Adrenal gland (tissue), 19 donors: ENCODE measurements at regions of chr10 and their contacts with region 1.

Region 1: DNA sequence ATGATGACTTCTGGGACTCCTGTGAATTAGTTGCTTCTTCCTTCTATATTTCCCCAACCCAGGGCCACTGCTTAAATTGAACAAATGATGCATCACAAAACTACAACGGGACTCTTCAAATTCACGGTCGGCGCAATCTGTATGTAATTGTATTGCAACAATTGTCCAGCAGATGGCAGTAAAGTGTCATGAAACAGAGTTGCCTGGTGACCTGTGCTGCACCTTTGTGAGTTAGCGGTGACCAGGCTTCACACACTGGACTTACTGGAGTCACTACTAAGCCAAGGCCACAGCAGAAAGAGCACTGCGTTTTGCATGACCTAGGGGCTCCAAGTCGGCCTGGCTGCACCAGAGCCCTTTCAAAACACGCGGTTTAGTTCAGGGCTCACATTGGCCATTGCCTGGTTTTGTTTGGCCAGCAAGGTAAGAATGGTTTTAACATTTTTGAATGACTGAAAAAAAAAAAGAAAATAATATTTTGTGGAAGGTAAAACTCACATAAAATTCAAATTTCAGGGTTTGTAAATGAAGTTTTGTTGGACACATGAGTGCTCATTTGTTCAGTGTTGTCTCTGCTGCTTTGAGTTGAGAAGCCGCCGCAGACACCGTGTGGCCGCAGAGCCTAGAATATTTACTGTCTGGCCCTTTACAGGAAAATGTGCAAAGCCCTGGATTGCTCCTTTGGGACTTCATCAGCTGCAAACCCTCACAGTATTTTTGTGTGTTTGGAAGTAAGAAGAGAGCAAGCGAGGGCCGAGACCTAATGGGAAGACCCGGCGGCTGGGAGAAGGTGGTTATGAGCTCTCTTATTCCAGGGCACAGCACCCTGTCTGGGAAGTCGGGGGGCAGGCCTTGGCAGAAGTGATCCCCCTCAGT is 23.2 kb upstream of the ZNF32 start:
- DNase-seq: peak; percentile 45 to 75 (median 61)
- H3K4me3 ChIP-seq: no peak overlapping the region
- H3K27ac ChIP-seq: no peak overlapping the region
- H3K4me1 ChIP-seq: peaks cover 0 to 3% of the 10 kb centered on the region in 2 donors
- H3K27me3 ChIP-seq: peaks cover 16% of the 10 kb centered on the region
- CTCF ChIP-seq: peak; percentile 77 to 92 (median 84)
- POLR2A ChIP-seq: no peak

Region 2: DNA sequence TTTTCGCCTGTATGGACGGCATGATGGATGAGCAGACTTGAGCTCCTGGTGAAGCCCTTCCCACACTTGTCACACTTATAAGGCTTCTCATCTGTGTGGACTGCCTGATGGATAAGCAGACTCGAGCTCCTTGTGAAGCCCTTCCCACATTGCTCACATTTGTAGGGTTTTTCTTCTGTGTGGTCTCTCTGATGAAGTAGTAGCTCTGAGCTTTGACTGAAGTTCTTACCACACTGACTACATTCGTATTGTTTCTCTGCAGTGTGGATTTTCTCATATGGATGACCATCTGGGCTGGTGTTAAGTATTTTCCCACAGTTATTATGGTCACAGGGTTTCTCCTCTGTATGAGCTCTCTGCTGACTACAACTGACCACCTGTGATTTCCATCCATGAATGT is 114.7 kb before region 1 on chr10:
- intact Hi-C with region 1: no loop called
- DNase-seq: no peak
- H3K4me3 ChIP-seq: no peak overlapping the region
- H3K27ac ChIP-seq: no peak overlapping the region
- H3K4me1 ChIP-seq: no peaks in the 10 kb centered on the region
- H3K27me3 ChIP-seq: no peaks in the 10 kb centered on the region
- CTCF ChIP-seq: no peak
- POLR2A ChIP-seq: no peak

Region 3: GRCh38 chr10:44864637-44865288 is 1192.9 kb after region 1 on chr10:
- intact Hi-C with region 1: loop called in 1 of 2 experiments (anchors 5 kb)
- DNase-seq: peak; percentile 84 to 95 (median 91)
- H3K4me3 ChIP-seq: peak overlapping the region in 2 of 4 donors; percentile 24 to 50
- H3K27ac ChIP-seq: peak overlapping the region in 2 of 5 donors; percentile 41 to 56
- H3K4me1 ChIP-seq: peaks cover 0 to 9% of the 10 kb centered on the region in 2 donors
- H3K27me3 ChIP-seq: peaks cover 19% of the 10 kb centered on the region
- CTCF ChIP-seq: peak; percentile 91 to 99 (median 96)
- POLR2A ChIP-seq: no peak